B cell (primary cell): ENCODE measurements at regions of chr12 and their contacts with region 1.

Region 1: GRCh38 chr12:47742253-47742825 is 16.3 kb downstream of the RAPGEF3 start:
- DNase-seq: peak; percentile 78
- ATAC-seq: peak; percentile 18
- H3K4me3 ChIP-seq: no peak overlapping the region
- H3K4me3 Mint-ChIP-seq: no peak overlapping the region
- H3K27ac ChIP-seq: no peak overlapping the region
- H3K27ac Mint-ChIP-seq: peak overlapping the region; percentile 75
- H3K4me1 ChIP-seq: peaks cover 43 to 61% of the 10 kb centered on the region in 2 donors
- H3K4me1 Mint-ChIP-seq: peaks cover 65% of the 10 kb centered on the region
- H3K27me3 ChIP-seq: no peaks in the 10 kb centered on the region
- H3K27me3 Mint-ChIP-seq: no peaks in the 10 kb centered on the region
- CTCF ChIP-seq: peak; percentile 98

Region 2: GRCh38 chr12:47651368-47652254 is 90.7 kb before region 1 on chr12:
- CTCF ChIA-PET with region 1: interaction called, 17 read pairs
- POLR2A ChIA-PET with region 1: no interaction called
- intact Hi-C with region 1: no loop called
- DNase-seq: peak; percentile 66
- ATAC-seq: peak; percentile 83
- H3K4me3 ChIP-seq: no peak overlapping the region
- H3K4me3 Mint-ChIP-seq: no peak overlapping the region
- H3K27ac ChIP-seq: no peak overlapping the region
- H3K27ac Mint-ChIP-seq: no peak overlapping the region
- H3K4me1 ChIP-seq: peaks cover 0 to 12% of the 10 kb centered on the region in 2 donors
- H3K4me1 Mint-ChIP-seq: peaks cover 13% of the 10 kb centered on the region
- H3K27me3 ChIP-seq: no peaks in the 10 kb centered on the region
- H3K27me3 Mint-ChIP-seq: no peaks in the 10 kb centered on the region
- CTCF ChIP-seq: peak; percentile 82

Region 3: GRCh38 chr12:47758834-47759690 is 16.7 kb after region 1 on chr12 and contains the start of gene RAPGEF3:
- CTCF ChIA-PET with region 1: interaction called, 452 read pairs
- POLR2A ChIA-PET with region 1: interaction called, 43 read pairs
- intact Hi-C with region 1: loop called (anchors 1 kb)
- DNase-seq: peak; percentile 78
- ATAC-seq: peak; percentile 77
- H3K4me3 ChIP-seq: peak within 1 kb of the TSS; percentile 15 to 71 (median 67)
- H3K4me3 Mint-ChIP-seq: peak within 1 kb of the TSS; percentile 85
- H3K27ac ChIP-seq: peak within 1 kb of the TSS in 1 of 2 donors; percentile 23
- H3K27ac Mint-ChIP-seq: peak within 1 kb of the TSS; percentile 50
- H3K4me1 ChIP-seq: peaks cover 52 to 66% of the 10 kb centered on the region in 2 donors
- H3K4me1 Mint-ChIP-seq: peaks cover 53% of the 10 kb centered on the region
- H3K27me3 ChIP-seq: no peaks in the 10 kb centered on the region
- H3K27me3 Mint-ChIP-seq: no peaks in the 10 kb centered on the region
- CTCF ChIP-seq: peak; percentile 70
- total RNA-seq, gene RAPGEF3: 5.2 and 5.4 TPM in 2 replicates

Region 4: GRCh38 chr12:47779301-47779942 is 37.1 kb after region 1 on chr12:
- CTCF ChIA-PET with region 1: interaction called, 515 read pairs
- POLR2A ChIA-PET with region 1: interaction called, 4 read pairs
- intact Hi-C with region 1: loop called (anchors 1 kb)
- DNase-seq: peak; percentile 90
- ATAC-seq: peak; percentile 90
- H3K4me3 ChIP-seq: no peak overlapping the region
- H3K4me3 Mint-ChIP-seq: no peak overlapping the region
- H3K27ac ChIP-seq: no peak overlapping the region
- H3K27ac Mint-ChIP-seq: peak overlapping the region; percentile 80
- H3K4me1 ChIP-seq: peaks cover 0 to 14% of the 10 kb centered on the region in 2 donors
- H3K4me1 Mint-ChIP-seq: peaks cover 23% of the 10 kb centered on the region
- H3K27me3 ChIP-seq: no peaks in the 10 kb centered on the region
- H3K27me3 Mint-ChIP-seq: no peaks in the 10 kb centered on the region
- CTCF ChIP-seq: peak; percentile 92

Region 5: GRCh38 chr12:47819896-47820630 is 77.7 kb after region 1 on chr12 and contains the start of gene HDAC7:
- CTCF ChIA-PET with region 1: interaction called, 10 read pairs
- POLR2A ChIA-PET with region 1: no interaction called
- intact Hi-C with region 1: no loop called
- DNase-seq: peak; percentile 82
- ATAC-seq: peak; percentile 74
- H3K4me3 ChIP-seq: peak within 1 kb of the TSS; percentile 58 to 76 (median 73)
- H3K4me3 Mint-ChIP-seq: peak within 1 kb of the TSS; percentile 96
- H3K27ac ChIP-seq: peak within 1 kb of the TSS; percentile 67 to 96
- H3K27ac Mint-ChIP-seq: peak within 1 kb of the TSS; percentile 97
- H3K4me1 ChIP-seq: peaks cover 51 to 64% of the 10 kb centered on the region in 2 donors
- H3K4me1 Mint-ChIP-seq: peaks cover 67% of the 10 kb centered on the region
- H3K27me3 ChIP-seq: no peaks in the 10 kb centered on the region
- H3K27me3 Mint-ChIP-seq: no peaks in the 10 kb centered on the region
- CTCF ChIP-seq: no peak
- total RNA-seq, gene HDAC7: 175 and 178 TPM in 2 replicates

Region 6: DNA sequence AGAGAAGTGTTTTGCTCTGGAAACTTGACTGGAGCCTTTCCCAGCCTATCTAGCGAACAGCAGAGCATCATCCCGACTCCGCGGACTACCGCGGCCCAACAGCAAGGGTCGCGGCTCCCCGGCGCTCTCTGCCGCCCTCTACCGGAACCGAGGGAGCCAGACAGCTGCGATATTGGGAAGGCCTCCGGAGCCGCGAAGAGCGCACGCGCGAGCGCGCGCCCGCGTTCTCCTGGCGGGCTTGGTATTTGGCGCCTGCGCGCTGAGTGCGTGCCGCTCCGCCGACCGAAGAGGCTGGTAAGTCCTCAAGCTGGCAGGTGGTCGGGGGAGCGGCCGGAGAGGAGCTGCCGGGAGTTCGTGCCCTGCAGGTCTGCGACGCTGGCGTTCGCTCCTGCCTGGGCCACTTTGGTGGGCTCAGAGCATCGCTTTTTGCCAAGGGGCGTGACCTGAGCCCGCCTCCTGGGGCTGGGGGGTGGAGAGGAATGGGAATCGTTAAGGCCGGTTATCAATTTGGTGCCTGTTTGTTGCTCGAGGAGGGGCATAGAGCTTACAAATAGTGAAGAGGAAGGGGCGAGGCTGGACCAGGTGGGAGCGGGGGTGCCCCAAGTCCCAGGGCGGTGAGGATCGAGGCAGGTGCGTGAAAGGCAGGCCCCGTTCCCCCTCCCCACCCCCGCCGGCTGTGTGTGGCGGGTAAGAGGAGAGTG is 221.2 kb after region 1 on chr12 and contains the start of gene TMEM106C:
- CTCF ChIA-PET with region 1: interaction called, 12 read pairs
- POLR2A ChIA-PET with region 1: no interaction called
- intact Hi-C with region 1: loop called (anchors 1 kb)
- DNase-seq: peak; percentile 97
- ATAC-seq: peak; percentile 99
- H3K4me3 ChIP-seq: peak within 1 kb of the TSS; percentile 68 to 96 (median 75)
- H3K4me3 Mint-ChIP-seq: peak within 1 kb of the TSS; percentile 96
- H3K27ac ChIP-seq: peak within 1 kb of the TSS; percentile 17 to 67
- H3K27ac Mint-ChIP-seq: peak within 1 kb of the TSS; percentile 86
- H3K4me1 ChIP-seq: peaks cover 6 to 14% of the 10 kb centered on the region in 2 donors
- H3K4me1 Mint-ChIP-seq: peaks cover 25% of the 10 kb centered on the region
- H3K27me3 ChIP-seq: no peaks in the 10 kb centered on the region
- H3K27me3 Mint-ChIP-seq: peaks cover 16% of the 10 kb centered on the region
- CTCF ChIP-seq: peak; percentile 94
- total RNA-seq, gene TMEM106C: 32.9 and 37.5 TPM in 2 replicates